ENCODE measurements at regions of chr1 and their contacts with region 1.

Region 1: GRCh38 chr1:26111530-26112406 is at the start of gene PDIK1L:
- DNase-seq: peak; percentile 85 to 93
- ATAC-seq: peak; percentile 73 to 76
- H3K4me3 ChIP-seq: peak within 1 kb of the TSS; percentile 89 to 96 (median 96)
- H3K27ac ChIP-seq: peak within 1 kb of the TSS; percentile 96 to 98 (median 97)
- H3K4me1 ChIP-seq: peaks cover 42 to 49% of the 10 kb centered on the region in 2 donors
- H3K27me3 ChIP-seq: no peaks in the 10 kb centered on the region
- CTCF ChIP-seq: peak in 1 of 5 experiments; percentile 24
- POLR2A ChIP-seq: peak; percentile 81 to 85
- total RNA-seq, gene PDIK1L: 4.4 to 8.7 (median 5.9) TPM

Region 2: GRCh38 chr1:25895365-25895993 is 216.3 kb before region 1 on chr1:
- in situ Hi-C with region 1: no loop called
- intact Hi-C with region 1: no loop called
- DNase-seq: peak; percentile 73 to 81
- ATAC-seq: peak; percentile 86 to 95
- H3K4me3 ChIP-seq: peak overlapping the region in 1 of 4 donors; percentile 9
- H3K27ac ChIP-seq: peak overlapping the region in 1 of 4 donors; percentile 43
- H3K4me1 ChIP-seq: peaks cover 9 to 12% of the 10 kb centered on the region in 2 donors
- H3K27me3 ChIP-seq: no peaks in the 10 kb centered on the region
- CTCF ChIP-seq: peak; percentile 95 to 99 (median 97)
- POLR2A ChIP-seq: no peak

Region 3: GRCh38 chr1:26124418-26125331 is 12.9 kb after region 1 on chr1:
- in situ Hi-C with region 1: no loop called
- intact Hi-C with region 1: loop called (anchors 2 kb)
- DNase-seq: no peak
- ATAC-seq: no peak
- H3K4me3 ChIP-seq: no peak overlapping the region
- H3K27ac ChIP-seq: peak overlapping the region; percentile 78 to 89 (median 84)
- H3K4me1 ChIP-seq: peaks cover 53 to 62% of the 10 kb centered on the region in 2 donors
- H3K27me3 ChIP-seq: no peaks in the 10 kb centered on the region
- CTCF ChIP-seq: no peak
- POLR2A ChIP-seq: no peak

Region 4: GRCh38 chr1:26145041-26145959 is 33.5 kb after region 1 on chr1:
- in situ Hi-C with region 1: loop called in 2 of 4 experiments (anchors 5 kb)
- intact Hi-C with region 1: no loop called
- DNase-seq: peak; percentile 64 to 78
- ATAC-seq: peak; percentile 99 to 100
- H3K4me3 ChIP-seq: no peak overlapping the region
- H3K27ac ChIP-seq: peak overlapping the region in 2 of 4 donors; percentile 37 to 38
- H3K4me1 ChIP-seq: peaks cover 0 to 9% of the 10 kb centered on the region in 2 donors
- H3K27me3 ChIP-seq: no peaks in the 10 kb centered on the region
- CTCF ChIP-seq: peak; percentile 54 to 93 (median 85)
- POLR2A ChIP-seq: no peak

Region 5: DNA sequence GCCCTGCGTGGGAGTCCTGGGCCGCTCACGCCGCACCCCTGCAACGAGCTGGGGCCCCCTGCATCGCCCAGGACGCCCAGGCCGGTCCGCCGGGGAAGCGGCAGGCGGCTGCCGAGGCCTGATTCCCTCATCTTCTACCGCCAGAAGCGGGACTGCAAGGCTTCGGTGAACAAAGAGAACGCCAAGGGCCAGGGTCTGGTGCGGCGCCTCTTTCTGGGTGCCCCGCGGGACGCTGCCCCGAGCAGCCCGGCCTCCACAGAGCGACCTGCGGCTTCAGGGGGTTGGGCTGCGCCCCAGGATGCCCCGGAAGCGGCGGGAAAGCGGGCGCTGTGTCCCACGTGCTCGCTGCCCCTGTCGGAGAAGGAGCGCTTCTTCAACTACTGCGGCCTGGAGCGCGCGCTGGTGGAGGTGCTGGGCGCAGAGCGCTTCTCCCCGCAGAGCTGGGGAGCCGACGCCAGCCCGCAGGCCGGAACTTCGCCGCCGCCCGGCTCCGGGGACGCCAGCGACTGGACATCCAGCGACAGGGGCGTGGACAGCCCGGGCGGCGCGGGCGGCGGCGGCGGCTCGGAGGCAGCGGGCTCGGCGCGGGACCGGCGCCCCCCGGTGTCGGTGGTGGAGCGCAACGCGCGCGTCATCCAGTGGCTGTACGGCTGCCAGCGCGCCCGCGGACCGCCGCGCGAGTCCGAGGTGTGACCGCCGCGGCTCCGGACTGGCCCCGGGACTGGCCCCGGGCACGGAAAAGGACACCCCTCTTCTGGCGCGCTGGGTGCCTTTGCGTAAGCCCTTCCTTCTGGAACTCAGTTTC is 49.8 kb after region 1 on chr1:
- in situ Hi-C with region 1: no loop called
- intact Hi-C with region 1: loop called (anchors 2 kb)
- DNase-seq: peak; percentile 36 to 69
- ATAC-seq: peak; percentile 66 to 78
- H3K4me3 ChIP-seq: peak overlapping the region; percentile 57 to 76 (median 68)
- H3K27ac ChIP-seq: peak overlapping the region; percentile 78 to 87 (median 84)
- H3K4me1 ChIP-seq: peaks cover 7 to 14% of the 10 kb centered on the region in 2 donors
- H3K27me3 ChIP-seq: no peaks in the 10 kb centered on the region
- CTCF ChIP-seq: peak; percentile 20 to 53 (median 36)
- POLR2A ChIP-seq: peak; percentile 68 to 74